Ascending aorta (tissue), 2 donors: ENCODE measurements at regions of chr12 and their contacts with region 1.

Region 1: GRCh38 chr12:50400598-50401364 is at the start of gene LARP4:
- DNase-seq: peak; percentile 76 to 95
- H3K4me3 ChIP-seq: peak within 1 kb of the TSS; percentile 76 to 80
- H3K27ac ChIP-seq: peak within 1 kb of the TSS; percentile 86 to 91
- H3K4me1 ChIP-seq: peaks cover 0 to 12% of the 10 kb centered on the region in 2 donors
- H3K27me3 ChIP-seq: no peaks in the 10 kb centered on the region
- CTCF ChIP-seq: peak in 1 of 3 experiments; percentile 7
- total RNA-seq, gene LARP4: 45.7 TPM

Region 2: GRCh38 chr12:49623142-49623904 is 777.5 kb before region 1 on chr12 and contains the start of gene PRPF40B:
- intact Hi-C with region 1: loop called (anchors 10 kb)
- DNase-seq: peak; percentile 49 to 93
- H3K4me3 ChIP-seq: peak within 1 kb of the TSS; percentile 49 to 77
- H3K27ac ChIP-seq: peak within 1 kb of the TSS; percentile 89 to 96
- H3K4me1 ChIP-seq: peaks cover 6 to 11% of the 10 kb centered on the region in 2 donors
- H3K27me3 ChIP-seq: no peaks in the 10 kb centered on the region
- CTCF ChIP-seq: peak; percentile 49 to 60 (median 58)
- total RNA-seq, gene PRPF40B: 9.5 TPM

Region 3: DNA sequence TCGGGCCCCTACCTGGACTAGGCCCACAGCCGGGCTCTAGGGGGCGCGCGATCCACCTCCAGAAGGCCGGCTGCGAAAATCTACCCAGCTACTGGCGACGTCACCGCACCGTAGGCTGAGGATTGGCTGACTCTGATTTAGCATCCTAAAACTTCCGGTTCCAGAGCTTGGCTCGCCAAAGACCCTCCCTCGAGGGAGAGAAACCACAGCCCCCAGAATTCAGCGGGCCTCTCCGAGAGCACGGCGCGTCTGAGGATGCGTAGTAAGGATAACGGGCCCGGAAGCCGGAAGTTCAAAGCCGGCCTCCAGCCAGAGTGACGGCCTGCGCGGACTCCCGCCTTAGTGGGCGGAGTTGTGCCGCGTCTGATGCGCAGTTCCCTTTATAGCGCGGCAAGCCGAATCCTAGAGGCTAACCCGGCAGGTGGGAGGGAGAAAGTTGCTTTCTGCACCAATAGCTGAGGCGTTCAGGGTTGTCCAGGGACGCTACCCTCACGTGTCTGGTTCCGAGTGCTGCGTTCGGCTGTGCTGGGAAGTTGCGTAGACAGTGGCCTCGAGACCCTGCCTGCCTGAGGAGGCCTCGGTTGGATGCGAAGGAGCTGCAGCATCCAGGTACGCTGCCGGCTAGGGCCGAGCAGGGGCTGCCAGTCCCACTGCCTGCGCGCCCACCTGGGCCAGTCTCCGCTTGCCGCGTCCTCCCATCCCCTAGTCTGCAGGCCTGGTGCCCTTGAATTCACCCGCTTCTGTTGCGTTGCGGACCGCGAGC is 288.9 kb before region 1 on chr12 and contains the start of gene COX14:
- intact Hi-C with region 1: loop called (anchors 5 kb)
- DNase-seq: peak; percentile 98 to 100
- H3K4me3 ChIP-seq: peak within 1 kb of the TSS; percentile 83 to 94
- H3K27ac ChIP-seq: peak within 1 kb of the TSS; percentile 96 to 98
- H3K4me1 ChIP-seq: peaks cover 22 to 40% of the 10 kb centered on the region in 2 donors
- H3K27me3 ChIP-seq: no peaks in the 10 kb centered on the region
- CTCF ChIP-seq: peak in 2 of 3 experiments; percentile 97 to 98
- total RNA-seq, gene COX14: 19.8 TPM